Calu3 (cell line): ENCODE measurements at regions of chr13 and their contacts with region 1.

Region 1: GRCh38 chr13:49606747-49607648 is 21.3 kb upstream of the ARL11 start:
- DNase-seq: peak; percentile 73
- H3K4me3 Mint-ChIP-seq: peak overlapping the region; percentile 43
- H3K27ac Mint-ChIP-seq: peak overlapping the region; percentile 30
- H3K4me1 Mint-ChIP-seq: no peaks in the 10 kb centered on the region
- H3K27me3 Mint-ChIP-seq: no peaks in the 10 kb centered on the region
- CTCF ChIP-seq: peak; percentile 48

Region 2: DNA sequence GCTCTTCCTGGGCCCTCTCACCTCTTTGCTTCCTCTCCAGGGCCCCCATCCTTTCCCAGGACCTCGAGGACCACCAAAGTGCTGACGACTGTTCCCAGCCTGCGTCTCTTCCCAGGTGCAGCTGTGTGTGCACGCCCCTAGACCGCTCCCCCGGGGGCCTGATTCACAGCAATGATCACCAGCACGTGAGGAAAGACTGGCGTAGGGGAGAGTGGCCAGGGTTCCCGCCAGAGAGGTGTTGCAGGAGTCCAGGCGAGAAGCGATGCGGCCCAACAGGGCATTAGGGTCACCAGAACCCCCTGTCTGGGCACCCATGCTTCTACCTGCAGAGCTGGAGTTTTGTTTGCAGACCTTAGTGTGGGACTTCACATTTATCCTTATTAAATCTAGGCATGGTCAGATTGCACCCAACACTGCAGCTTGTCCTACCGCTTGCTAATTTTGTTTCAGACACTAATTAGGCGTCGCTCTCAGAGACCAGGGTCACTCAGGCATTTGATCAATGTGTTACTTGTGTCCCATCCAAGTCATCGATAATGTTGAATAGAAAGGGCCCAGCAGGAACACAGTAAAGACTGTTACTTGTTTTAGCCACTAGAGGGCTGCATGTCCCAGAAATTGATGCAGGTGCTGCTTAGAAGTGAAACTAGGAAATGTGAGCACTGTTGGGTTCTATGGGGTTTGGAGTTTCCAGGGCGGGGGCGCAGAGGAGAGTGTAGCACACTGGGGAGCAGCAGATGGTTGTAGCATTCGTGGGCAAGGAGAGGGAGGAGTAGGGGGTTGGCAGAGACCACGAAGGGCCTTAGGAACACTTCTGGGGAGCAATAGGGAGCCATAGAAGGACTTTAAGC is 306.0 kb before region 1 on chr13:
- CTCF ChIA-PET with region 1: interaction called, 5 read pairs
- intact Hi-C with region 1: loop called (anchors 1 kb)
- DNase-seq: peak; percentile 41
- H3K4me3 Mint-ChIP-seq: no peak overlapping the region
- H3K27ac Mint-ChIP-seq: peak overlapping the region; percentile 64
- H3K4me1 Mint-ChIP-seq: peaks cover 43% of the 10 kb centered on the region
- H3K27me3 Mint-ChIP-seq: no peaks in the 10 kb centered on the region
- CTCF ChIP-seq: peak; percentile 45

Region 3: DNA sequence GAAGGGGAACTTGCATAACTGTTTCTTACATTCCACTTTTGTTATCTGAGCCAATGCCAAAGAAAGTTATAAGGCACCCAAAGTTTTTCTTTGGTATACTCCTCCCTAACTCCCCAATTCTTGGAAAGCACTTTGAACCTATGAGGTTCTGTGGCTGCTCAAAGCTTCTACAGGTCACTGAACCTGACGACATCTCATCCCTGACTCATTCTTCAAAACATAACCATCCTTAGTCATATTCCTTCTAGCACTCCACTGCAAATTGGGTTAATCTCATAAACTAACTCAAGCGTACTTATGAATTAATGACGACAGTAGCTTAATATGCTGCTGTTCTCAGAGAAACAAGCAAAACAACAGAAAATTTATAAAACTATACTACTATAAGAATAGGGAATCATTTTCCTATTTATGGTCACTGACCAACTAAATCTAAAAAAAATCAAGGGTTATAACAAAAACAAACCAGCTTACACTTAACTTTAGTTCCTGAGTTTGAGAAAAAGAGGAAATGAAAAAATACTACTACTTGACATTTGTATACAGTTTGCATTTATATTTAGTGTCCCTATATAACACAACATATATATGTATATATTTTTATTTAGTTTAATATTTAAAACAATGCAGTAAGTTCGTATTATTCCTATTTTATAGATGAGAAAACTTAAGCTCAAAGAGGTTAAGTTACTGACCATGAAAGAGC is 232.3 kb before region 1 on chr13:
- CTCF ChIA-PET with region 1: no interaction called
- intact Hi-C with region 1: no loop called
- DNase-seq: no peak
- H3K4me3 Mint-ChIP-seq: no peak overlapping the region
- H3K27ac Mint-ChIP-seq: no peak overlapping the region
- H3K4me1 Mint-ChIP-seq: no peaks in the 10 kb centered on the region
- H3K27me3 Mint-ChIP-seq: no peaks in the 10 kb centered on the region
- CTCF ChIP-seq: no peak

Region 4: GRCh38 chr13:49495783-49496762 is 110.9 kb before region 1 on chr13 and contains the start of gene PHF11:
- CTCF ChIA-PET with region 1: no interaction called
- intact Hi-C with region 1: loop called (anchors 5 kb)
- DNase-seq: peak; percentile 68
- H3K4me3 Mint-ChIP-seq: peak within 1 kb of the TSS; percentile 76
- H3K27ac Mint-ChIP-seq: peak within 1 kb of the TSS; percentile 74
- H3K4me1 Mint-ChIP-seq: peaks cover 12% of the 10 kb centered on the region
- H3K27me3 Mint-ChIP-seq: no peaks in the 10 kb centered on the region
- CTCF ChIP-seq: peak; percentile 12
- total RNA-seq, gene PHF11: 24.0 and 28.8 TPM in 2 replicates

Region 5: GRCh38 chr13:49560270-49561050 is 46.5 kb before region 1 on chr13:
- CTCF ChIA-PET with region 1: interaction called, 17 read pairs
- intact Hi-C with region 1: loop called (anchors 5 kb)
- DNase-seq: peak; percentile 38
- H3K4me3 Mint-ChIP-seq: no peak overlapping the region
- H3K27ac Mint-ChIP-seq: no peak overlapping the region
- H3K4me1 Mint-ChIP-seq: peaks cover 16% of the 10 kb centered on the region
- H3K27me3 Mint-ChIP-seq: no peaks in the 10 kb centered on the region
- CTCF ChIP-seq: no peak

Region 6: DNA sequence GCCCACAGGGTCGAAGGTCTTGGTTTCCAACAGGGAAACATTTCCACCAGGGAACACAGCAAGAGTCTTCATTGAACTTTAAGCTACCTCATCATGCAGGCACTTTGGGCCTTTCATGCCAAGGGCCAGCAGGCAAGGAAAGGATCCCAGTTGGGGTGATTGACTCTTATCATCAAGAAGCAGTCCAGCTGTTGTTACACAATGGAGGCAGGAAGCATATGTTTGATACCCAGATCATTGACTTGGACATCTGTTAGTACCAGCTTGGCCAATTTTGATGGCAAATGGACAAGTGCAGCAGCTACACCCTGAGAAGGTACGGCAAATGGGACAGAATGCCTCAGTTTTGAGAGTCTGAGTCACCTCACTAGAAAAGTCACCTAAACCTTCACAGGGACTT is 10.8 kb before region 1 on chr13:
- CTCF ChIA-PET with region 1: no interaction called
- intact Hi-C with region 1: no loop called
- DNase-seq: no peak
- H3K4me3 Mint-ChIP-seq: no peak overlapping the region
- H3K27ac Mint-ChIP-seq: no peak overlapping the region
- H3K4me1 Mint-ChIP-seq: no peaks in the 10 kb centered on the region
- H3K27me3 Mint-ChIP-seq: no peaks in the 10 kb centered on the region
- CTCF ChIP-seq: no peak

Region 7: GRCh38 chr13:49669735-49670309 is 62.8 kb after region 1 on chr13:
- CTCF ChIA-PET with region 1: no interaction called
- intact Hi-C with region 1: no loop called
- DNase-seq: peak; percentile 49
- H3K4me3 Mint-ChIP-seq: no peak overlapping the region
- H3K27ac Mint-ChIP-seq: no peak overlapping the region
- H3K4me1 Mint-ChIP-seq: no peaks in the 10 kb centered on the region
- H3K27me3 Mint-ChIP-seq: no peaks in the 10 kb centered on the region
- CTCF ChIP-seq: peak; percentile 30